HCT116 (cell line): ENCODE measurements at regions of chr17 and their contacts with region 1.

Region 1: DNA sequence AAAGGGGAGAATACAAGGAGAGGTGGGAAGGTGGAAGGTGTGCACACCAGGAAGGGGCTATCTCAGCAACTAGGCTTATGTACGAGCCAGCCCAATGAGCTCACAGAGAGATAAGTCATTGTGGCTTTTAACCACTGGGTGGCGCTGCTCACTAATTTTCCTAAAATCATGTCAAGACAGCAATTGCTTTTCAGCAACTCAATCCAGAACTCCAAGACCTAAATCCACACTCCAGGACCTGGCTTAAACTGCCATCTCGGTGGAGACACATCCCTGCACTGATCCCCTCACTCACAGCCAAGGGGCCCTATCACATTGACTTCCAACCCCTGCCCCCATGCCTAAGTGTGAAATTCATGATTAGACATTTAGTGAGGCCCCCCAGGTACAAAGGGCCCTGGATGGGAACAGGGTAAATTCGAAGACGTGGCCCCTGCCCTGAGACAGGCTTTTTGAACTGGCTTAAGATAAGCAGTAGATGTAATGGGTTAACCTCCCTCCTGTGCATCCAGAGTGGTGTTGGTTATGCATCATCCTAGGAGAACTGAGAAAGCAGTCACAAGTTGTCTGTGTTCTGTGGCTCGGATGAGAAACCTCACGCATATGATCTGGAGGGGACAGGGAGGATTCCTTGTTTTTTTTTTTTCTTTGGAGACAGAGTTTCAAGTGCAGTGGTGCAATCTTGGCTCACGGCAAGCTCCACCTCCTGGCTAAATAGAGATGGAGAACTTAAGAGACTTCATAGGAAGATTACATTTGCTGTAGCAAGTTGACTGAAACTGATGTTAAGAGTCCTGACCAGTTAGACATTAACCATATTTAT is 11.5 kb downstream of the CCL16 start:
- DNase-seq: peak; percentile 76
- ATAC-seq: peak; percentile 96
- H3K4me3 ChIP-seq: no peak overlapping the region
- H3K27ac ChIP-seq: no peak overlapping the region
- H3K4me1 ChIP-seq: no peaks in the 10 kb centered on the region
- H3K27me3 ChIP-seq: no peaks in the 10 kb centered on the region
- CTCF ChIP-seq: peak; percentile 66 to 87 (median 74); a peak in 5 of 6 replicates
- POLR2A ChIP-seq: no peak
- RAD21 ChIP-seq: peak; percentile 90

Region 2: GRCh38 chr17:35953720-35954119 is 16.0 kb before region 1 on chr17:
- CTCF ChIA-PET with region 1: interaction called, 10 read pairs
- POLR2A ChIA-PET with region 1: no interaction called
- RAD21 ChIA-PET with region 1: no interaction called
- intact Hi-C with region 1: no loop called
- DNase-seq: no peak
- ATAC-seq: no peak
- H3K4me3 ChIP-seq: no peak overlapping the region
- H3K27ac ChIP-seq: no peak overlapping the region
- H3K4me1 ChIP-seq: no peaks in the 10 kb centered on the region
- H3K27me3 ChIP-seq: no peaks in the 10 kb centered on the region
- CTCF ChIP-seq: no peak
- POLR2A ChIP-seq: no peak
- RAD21 ChIP-seq: no peak

Region 3: GRCh38 chr17:36072431-36073121 is 102.8 kb after region 1 on chr17:
- CTCF ChIA-PET with region 1: interaction called, 13 read pairs
- POLR2A ChIA-PET with region 1: no interaction called
- RAD21 ChIA-PET with region 1: interaction called in 1 of 2 experiments, 3 read pairs
- intact Hi-C with region 1: no loop called
- DNase-seq: peak; percentile 24
- ATAC-seq: peak; percentile 88
- H3K4me3 ChIP-seq: no peak overlapping the region
- H3K27ac ChIP-seq: no peak overlapping the region
- H3K4me1 ChIP-seq: no peaks in the 10 kb centered on the region
- H3K27me3 ChIP-seq: no peaks in the 10 kb centered on the region
- CTCF ChIP-seq: peak; percentile 25 to 91 (median 71); a peak in 4 of 6 replicates
- POLR2A ChIP-seq: no peak
- RAD21 ChIP-seq: peak; percentile 33; the same call in 1 of the 2 replicates

Region 4: DNA sequence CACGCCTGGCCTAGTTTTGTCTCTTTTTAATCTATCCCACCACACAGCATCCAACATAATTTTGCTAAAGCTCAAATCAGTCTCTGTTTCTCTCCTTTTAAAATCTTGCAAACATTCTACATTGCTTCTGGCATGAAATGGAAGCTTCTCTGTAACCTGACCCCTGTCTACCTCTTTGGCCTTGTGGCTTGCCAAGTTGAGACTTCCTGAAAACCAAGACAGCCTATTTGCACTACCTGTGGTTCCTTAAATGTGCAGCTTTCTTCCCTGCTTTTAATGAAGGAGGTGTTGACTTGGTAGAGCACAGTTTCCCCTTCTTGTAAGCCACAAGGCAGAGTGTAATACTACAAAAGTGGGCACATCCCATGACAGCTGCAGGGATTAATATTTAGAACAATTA is 126.2 kb after region 1 on chr17:
- CTCF ChIA-PET with region 1: no interaction called
- POLR2A ChIA-PET with region 1: no interaction called
- RAD21 ChIA-PET with region 1: no interaction called
- intact Hi-C with region 1: no loop called
- DNase-seq: no peak
- ATAC-seq: no peak
- H3K4me3 ChIP-seq: no peak overlapping the region
- H3K27ac ChIP-seq: no peak overlapping the region
- H3K4me1 ChIP-seq: no peaks in the 10 kb centered on the region
- H3K27me3 ChIP-seq: 0 out of 2 replicates have a peak, but pooled peaks cover 4% of the 10 kb centered on the region
- CTCF ChIP-seq: no peak
- POLR2A ChIP-seq: no peak
- RAD21 ChIP-seq: no peak

Region 5: DNA sequence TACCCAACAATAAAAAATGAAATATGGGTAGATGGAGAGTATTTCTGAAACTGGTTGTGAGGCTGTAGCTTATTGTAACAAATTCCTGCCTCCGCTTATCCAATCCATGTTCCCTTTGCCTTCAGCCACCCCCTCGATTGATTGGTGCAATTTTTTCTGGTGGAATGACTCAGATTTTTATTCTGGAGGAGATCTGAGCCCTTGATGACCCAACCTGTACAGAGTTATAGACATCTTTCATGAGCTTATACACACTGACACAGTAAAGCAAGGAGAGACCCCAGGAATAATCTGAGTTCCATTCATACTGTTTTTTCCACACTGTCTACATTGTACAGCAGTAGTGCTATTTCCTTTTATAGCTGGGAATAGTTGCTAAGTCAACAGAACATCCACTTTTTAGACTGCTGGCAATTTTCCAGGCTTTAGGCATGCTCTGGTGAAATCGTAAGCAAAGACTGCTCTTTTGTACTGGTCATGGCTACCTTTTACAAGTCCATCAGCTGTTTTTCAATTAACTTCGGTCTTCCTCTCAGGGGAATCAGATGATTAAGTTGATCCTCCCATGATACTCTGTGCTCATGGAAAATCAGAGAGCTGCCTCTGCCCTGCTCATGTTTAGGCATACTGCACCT is 163.9 kb after region 1 on chr17:
- CTCF ChIA-PET with region 1: no interaction called
- POLR2A ChIA-PET with region 1: no interaction called
- RAD21 ChIA-PET with region 1: interaction called in 1 of 2 experiments, 3 read pairs
- intact Hi-C with region 1: loop called (anchors 5 kb)
- DNase-seq: no peak
- ATAC-seq: no peak
- H3K4me3 ChIP-seq: no peak overlapping the region
- H3K27ac ChIP-seq: no peak overlapping the region
- H3K4me1 ChIP-seq: no peaks in the 10 kb centered on the region
- H3K27me3 ChIP-seq: 0 out of 2 replicates have a peak, but pooled peaks cover 7% of the 10 kb centered on the region
- CTCF ChIP-seq: no peak
- POLR2A ChIP-seq: no peak
- RAD21 ChIP-seq: no peak

Region 6: DNA sequence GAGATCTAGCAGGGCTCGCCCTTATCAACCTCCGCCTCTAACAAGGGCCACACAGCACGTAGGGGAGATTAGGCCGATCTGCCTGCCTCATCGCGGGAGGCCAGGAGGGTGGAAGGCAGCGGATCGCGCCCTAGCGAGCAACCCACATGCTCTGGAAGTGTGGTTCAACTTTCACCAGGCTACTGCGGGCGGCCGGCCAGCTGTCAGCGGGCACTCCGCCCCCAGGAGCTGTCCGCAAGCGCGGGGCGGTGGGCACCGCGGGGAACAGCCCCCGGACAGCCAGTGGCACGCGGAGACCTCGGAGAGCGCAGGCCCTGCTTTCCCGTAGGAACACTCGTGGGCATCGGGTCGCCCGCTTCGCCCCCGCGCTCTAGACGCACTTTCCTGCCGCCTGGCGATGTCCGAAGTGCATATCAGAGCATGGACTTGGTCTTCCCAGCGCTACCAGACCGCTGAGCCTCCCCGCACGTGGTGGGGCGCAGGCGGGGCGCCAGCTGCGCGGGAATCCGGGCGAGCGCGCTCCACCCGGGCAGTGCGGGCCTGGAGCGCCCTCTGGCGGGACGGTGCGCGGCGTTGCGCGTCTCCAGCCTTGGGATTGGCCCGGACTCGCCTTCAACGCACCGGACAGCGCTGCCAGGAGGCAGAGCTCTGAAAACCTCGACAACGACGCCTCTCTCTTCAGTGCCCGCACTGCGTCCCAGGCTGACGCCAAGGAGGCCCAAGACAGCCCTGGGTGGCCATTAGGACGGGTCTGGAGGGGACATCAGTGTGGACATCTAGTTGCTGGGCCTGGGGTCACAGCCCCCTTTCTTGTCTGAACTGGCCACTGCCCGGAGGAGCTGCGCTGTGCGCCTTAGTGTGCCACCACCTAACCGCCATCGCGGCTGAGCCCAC is 513.1 kb after region 1 on chr17:
- CTCF ChIA-PET with region 1: interaction called, 8 read pairs
- POLR2A ChIA-PET with region 1: interaction called, 3 read pairs
- RAD21 ChIA-PET with region 1: interaction called in 1 of 2 experiments, 4 read pairs
- intact Hi-C with region 1: loop called (anchors 5 kb)
- DNase-seq: peak; percentile 66
- ATAC-seq: peak; percentile 86
- H3K4me3 ChIP-seq: no peak overlapping the region
- H3K27ac ChIP-seq: no peak overlapping the region
- H3K4me1 ChIP-seq: peaks cover 4 to 24% of the 10 kb centered on the region in 2 experiments; a peak in 3 of 4 replicates
- H3K27me3 ChIP-seq: peaks cover 5% of the 10 kb centered on the region; the same call in 1 of the 2 replicates
- CTCF ChIP-seq: peak; percentile 90 to 98 (median 96)
- POLR2A ChIP-seq: no peak
- RAD21 ChIP-seq: peak; percentile 98